Mammary epithelial cell (primary cell): ENCODE measurements at regions of chr12 and their contacts with region 1.

Region 1: DNA sequence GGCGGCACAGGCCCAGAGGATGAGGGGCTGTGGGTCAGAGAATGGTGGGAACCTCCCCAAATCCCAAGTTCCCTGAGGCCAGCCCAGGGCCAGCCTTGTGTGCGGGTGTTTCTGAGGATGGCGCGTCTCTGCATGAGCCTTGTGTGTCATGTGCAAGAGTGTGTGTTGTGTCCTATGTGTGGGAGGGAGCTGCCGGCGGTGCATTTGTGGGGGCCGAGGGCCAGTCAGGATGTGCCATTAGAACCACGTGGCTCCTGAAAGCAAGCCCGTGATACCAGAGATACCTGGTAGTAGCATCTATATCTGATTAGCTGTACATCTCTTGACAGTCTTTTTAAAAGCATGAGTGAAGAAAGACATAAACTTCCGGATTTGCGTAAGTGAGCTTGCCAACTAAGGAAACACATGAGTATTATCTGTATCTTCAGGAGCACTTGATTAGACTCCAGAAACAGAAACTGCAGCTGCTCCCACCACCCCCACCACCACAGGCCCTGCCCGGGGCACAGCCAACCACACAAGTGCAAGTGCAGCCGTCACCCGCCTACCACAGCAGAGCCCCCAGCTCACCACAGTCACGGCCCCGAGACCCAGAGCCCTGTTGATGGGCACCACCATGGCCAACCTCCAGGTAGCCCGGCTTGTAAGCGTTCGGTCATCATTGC is 19.2 kb downstream of the DDX51 start:
- DNase-seq: no peak
- H3K4me3 ChIP-seq: no peak overlapping the region
- H3K27ac ChIP-seq: no peak overlapping the region
- H3K4me1 ChIP-seq: no peaks in the 10 kb centered on the region
- H3K27me3 ChIP-seq: no peaks in the 10 kb centered on the region
- CTCF ChIP-seq: no peak

Region 2: GRCh38 chr12:131673888-131674257 is 451.0 kb before region 1 on chr12:
- CTCF ChIA-PET with region 1: no interaction called
- dilution Hi-C with region 1: no loop called
- in situ Hi-C with region 1: no loop called
- intact Hi-C with region 1: no loop called
- DNase-seq: peak; percentile 29
- H3K4me3 ChIP-seq: no peak overlapping the region
- H3K27ac ChIP-seq: no peak overlapping the region
- H3K4me1 ChIP-seq: no peaks in the 10 kb centered on the region
- H3K27me3 ChIP-seq: peaks cover 2% of the 10 kb centered on the region
- CTCF ChIP-seq: no peak

Region 3: GRCh38 chr12:131710464-131711457 is 414.1 kb before region 1 on chr12 and contains the start of gene SFSWAP:
- CTCF ChIA-PET with region 1: no interaction called
- dilution Hi-C with region 1: no loop called
- in situ Hi-C with region 1: no loop called
- intact Hi-C with region 1: no loop called
- DNase-seq: peak; percentile 80
- H3K4me3 ChIP-seq: peak within 1 kb of the TSS; percentile 61 to 97 (median 81)
- H3K27ac ChIP-seq: peak within 1 kb of the TSS; percentile 98
- H3K4me1 ChIP-seq: peaks cover 15% of the 10 kb centered on the region
- H3K27me3 ChIP-seq: no peaks in the 10 kb centered on the region
- CTCF ChIP-seq: no peak
- total RNA-seq, gene SFSWAP: 19.8 to 41.6 TPM

Region 4: DNA sequence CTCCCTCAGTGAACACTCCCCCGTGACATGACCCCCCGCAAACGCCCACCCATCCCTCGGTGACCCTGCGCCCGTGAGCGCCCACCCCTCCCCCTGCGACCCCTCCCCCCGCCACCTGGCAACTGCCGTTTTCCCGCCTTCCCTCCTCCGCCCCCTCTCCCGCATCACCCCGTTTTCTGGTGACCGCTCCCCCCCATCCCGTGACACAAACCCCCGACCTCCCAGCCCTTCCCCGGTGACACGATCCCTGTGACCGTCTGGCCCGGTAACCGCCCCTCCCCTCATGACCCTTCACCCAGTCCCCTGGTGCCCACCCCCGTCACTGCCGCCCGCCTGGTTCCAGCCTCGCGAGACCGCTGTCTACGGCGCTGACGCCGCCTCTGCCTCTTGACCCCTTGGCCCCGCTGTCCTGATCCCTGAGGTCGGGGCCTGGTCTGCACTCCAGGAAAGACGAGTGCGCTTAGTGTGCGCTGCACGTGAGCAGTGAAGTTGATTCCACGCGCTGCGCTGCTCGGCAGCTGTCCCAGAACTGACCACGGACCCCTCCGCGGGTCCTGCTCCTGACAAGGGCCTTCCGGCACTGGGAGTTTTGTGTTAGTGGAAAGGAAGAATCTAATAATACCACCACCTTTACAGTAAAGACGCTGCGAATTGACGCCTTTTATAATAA is 40.1 kb before region 1 on chr12:
- CTCF ChIA-PET with region 1: no interaction called
- dilution Hi-C with region 1: loop called (anchors 5 kb)
- in situ Hi-C with region 1: no loop called
- intact Hi-C with region 1: no loop called
- DNase-seq: peak; percentile 42
- H3K4me3 ChIP-seq: peak overlapping the region; percentile 52 to 89 (median 85)
- H3K27ac ChIP-seq: peak overlapping the region; percentile 58
- H3K4me1 ChIP-seq: peaks cover 12% of the 10 kb centered on the region
- H3K27me3 ChIP-seq: no peaks in the 10 kb centered on the region
- CTCF ChIP-seq: no peak

Region 5: GRCh38 chr12:132170094-132170636 is 45.3 kb after region 1 on chr12:
- CTCF ChIA-PET with region 1: no interaction called
- dilution Hi-C with region 1: loop called (anchors 5 kb)
- in situ Hi-C with region 1: no loop called
- intact Hi-C with region 1: no loop called
- DNase-seq: no peak
- H3K4me3 ChIP-seq: no peak overlapping the region
- H3K27ac ChIP-seq: no peak overlapping the region
- H3K4me1 ChIP-seq: no peaks in the 10 kb centered on the region
- H3K27me3 ChIP-seq: peaks cover 7% of the 10 kb centered on the region
- CTCF ChIP-seq: no peak